Activated CD4-positive, alpha-beta T cell treated with anti-CD3 and anti-CD28 coated beads, Interleukin-2, amount 10 ng/mL, durations not matched to agents 24 days and 14 days (primary cell): ENCODE measurements at regions of chr13 and their contacts with region 1.

Region 1: GRCh38 chr13:20197361-20197834 is 4.7 kb upstream of the GJB2 start:
- DNase-seq: peak; percentile 71
- H3K4me3 Mint-ChIP-seq: no peak overlapping the region
- H3K27ac Mint-ChIP-seq: no peak overlapping the region
- H3K4me1 Mint-ChIP-seq: peaks cover 25% of the 10 kb centered on the region
- H3K27me3 Mint-ChIP-seq: peaks cover 49% of the 10 kb centered on the region

Region 2: GRCh38 chr13:20118268-20119140 is 78.9 kb before region 1 on chr13:
- intact Hi-C with region 1: no loop called
- DNase-seq: peak; percentile 77
- H3K4me3 Mint-ChIP-seq: peak overlapping the region; percentile 85
- H3K27ac Mint-ChIP-seq: peak overlapping the region; percentile 39
- H3K4me1 Mint-ChIP-seq: peaks cover 13% of the 10 kb centered on the region
- H3K27me3 Mint-ChIP-seq: peaks cover 20% of the 10 kb centered on the region

Region 3: DNA sequence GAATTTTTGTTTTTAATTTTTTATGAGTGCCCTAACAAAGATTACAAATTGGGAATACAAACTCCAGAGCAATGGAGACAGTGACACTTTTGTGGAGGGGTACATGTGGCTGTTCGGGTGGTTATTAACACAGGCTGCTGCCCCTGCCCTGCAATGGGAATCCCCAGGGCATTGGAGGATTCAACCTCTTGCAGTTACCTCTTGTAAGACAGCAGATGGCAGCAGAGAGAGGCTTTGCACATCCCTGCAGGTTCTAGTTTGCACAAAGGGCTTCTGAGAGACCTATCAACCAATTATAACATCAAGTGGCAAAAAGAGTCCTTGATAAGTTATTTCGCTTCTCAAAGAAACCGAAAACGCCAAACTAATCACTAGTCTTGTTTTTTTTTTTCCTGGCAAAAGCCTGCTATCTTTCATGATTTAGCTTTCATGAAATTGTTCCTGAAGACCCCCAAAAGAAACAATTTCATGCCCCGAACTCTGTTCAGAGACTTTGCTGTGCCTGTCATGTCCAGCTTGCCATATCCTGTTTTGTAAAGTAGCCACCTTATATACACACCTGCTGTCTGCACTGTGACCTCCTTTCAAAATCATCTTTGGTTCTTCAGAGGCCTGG is 15.1 kb before region 1 on chr13:
- intact Hi-C with region 1: loop called (anchors 2 kb)
- DNase-seq: peak; percentile 85
- H3K4me3 Mint-ChIP-seq: no peak overlapping the region
- H3K27ac Mint-ChIP-seq: no peak overlapping the region
- H3K4me1 Mint-ChIP-seq: no peaks in the 10 kb centered on the region
- H3K27me3 Mint-ChIP-seq: peaks cover 47% of the 10 kb centered on the region

Region 4: DNA sequence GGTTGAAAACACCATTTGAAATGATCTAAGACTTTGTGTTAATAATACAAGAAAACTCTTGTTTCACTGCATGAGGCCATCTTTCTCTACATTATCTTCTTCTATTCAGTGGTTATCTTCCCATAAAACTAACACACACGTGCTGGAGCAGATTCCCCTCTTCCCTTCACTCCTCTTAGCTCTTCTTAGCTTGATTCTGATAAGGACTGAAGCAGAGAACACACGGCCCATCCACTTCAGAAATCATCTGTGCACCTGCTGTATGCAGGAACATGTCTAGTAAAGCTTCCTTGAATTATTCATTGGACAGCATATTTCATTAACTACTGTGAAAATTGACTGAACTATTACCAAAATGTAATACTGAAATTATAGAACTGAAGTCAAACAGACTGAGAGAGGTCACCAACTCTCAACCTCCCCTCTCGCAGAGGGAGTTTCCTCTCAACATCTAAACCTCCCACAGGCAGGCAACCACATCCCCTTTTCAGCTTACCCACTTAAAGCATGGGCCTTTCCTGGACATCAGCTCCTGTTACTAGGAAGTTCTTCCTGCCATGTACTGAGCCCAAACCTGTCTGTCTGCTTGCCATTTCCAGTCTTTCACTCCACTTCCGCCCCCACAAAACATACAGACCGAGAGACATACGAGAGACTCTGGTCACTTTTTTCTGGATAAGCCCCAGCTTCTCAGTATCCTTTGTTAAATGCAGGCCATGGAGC is 214.4 kb after region 1 on chr13:
- intact Hi-C with region 1: loop called (anchors 5 kb)
- DNase-seq: peak; percentile 85
- H3K4me3 Mint-ChIP-seq: peak overlapping the region; percentile 68
- H3K27ac Mint-ChIP-seq: peak overlapping the region; percentile 81
- H3K4me1 Mint-ChIP-seq: peaks cover 26% of the 10 kb centered on the region
- H3K27me3 Mint-ChIP-seq: no peaks in the 10 kb centered on the region